ENCODE measurements at regions of chr12 and their contacts with region 1.

Region 1: DNA sequence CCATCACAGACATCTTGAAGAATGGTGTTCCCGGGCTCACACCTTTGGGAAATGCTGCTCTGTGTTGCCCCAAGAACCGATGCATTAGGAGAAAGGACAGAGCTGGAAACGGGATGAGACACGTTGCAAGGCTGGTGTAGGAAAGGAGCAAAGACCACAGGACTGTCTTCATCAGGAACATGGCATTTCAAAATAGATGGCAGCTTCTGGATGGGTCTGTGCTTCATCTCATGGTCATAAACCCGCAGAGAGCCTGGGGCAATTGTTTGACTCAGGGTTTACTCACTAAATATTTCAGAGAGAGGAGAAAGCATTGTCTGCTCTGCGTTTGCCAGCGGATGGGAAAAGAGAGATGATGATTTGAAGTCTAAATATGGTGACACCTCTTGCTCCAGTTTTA is 76.3 kb downstream of the CACNA1C start:
- DNase-seq: no peak
- ATAC-seq: no peak

Region 2: GRCh38 chr12:2084553-2085296 is 44.4 kb before region 1 on chr12:
- intact Hi-C with region 1: no loop called
- DNase-seq: peak; percentile 73
- ATAC-seq: peak; percentile 90

Region 3: GRCh38 chr12:2095864-2096263 is 33.2 kb before region 1 on chr12:
- intact Hi-C with region 1: no loop called
- DNase-seq: no peak
- ATAC-seq: no peak

Region 4: DNA sequence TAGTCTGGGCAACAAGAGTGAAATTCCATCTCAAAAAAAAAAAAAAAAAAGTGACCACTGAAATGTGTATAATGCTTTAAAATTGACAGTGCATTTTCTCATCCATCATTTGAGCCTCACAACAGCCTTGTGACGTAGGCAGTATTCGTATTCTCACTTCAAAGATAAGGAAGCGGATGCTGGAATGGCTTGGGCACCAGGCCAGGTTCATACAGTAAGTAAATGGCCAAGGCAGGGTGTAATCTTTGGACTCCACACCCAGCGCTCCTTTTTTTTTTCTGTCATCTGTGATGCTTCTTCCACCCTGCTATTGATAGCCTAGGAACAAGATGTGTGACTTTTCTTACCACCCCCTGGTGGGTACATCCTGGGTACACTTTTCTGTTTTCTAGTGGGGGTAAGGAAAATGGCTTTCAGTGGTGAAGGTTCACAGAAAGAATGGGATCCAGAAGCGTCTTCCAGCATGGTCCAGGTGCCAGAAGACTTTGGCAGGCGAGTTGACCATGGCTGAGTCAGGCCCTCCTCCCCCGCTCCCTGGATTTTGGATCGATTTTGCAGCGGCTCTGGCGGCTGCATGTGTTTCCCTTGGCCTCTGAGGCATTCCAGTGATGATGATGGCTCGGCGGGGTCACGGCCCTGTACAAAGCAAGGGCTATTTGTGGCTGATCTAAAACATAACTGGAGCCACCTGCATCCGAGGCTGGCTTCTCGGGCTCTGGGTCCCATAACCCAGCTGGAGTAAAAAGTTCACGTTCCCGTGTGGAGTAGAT is 34.3 kb after region 1 on chr12:
- intact Hi-C with region 1: loop called (anchors 5 kb)
- DNase-seq: peak; percentile 93
- ATAC-seq: peak; percentile 94

Measured in Right ventricle myocardium inferior (tissue), 1 donor.